Heart left ventricle (tissue), 16 donors: ENCODE measurements at regions of chr15 and their contacts with region 1.

Region 1: GRCh38 chr15:31215490-31216214 is 111.0 kb upstream of the KLF13 start:
- DNase-seq: peak; percentile 81 to 95 (median 88)
- ATAC-seq: peak; percentile 77 to 90 (median 87)
- H3K4me3 ChIP-seq: peak overlapping the region; percentile 44 to 75 (median 65)
- H3K27ac ChIP-seq: peak overlapping the region; percentile 91 to 98 (median 96)
- H3K4me1 ChIP-seq: peaks cover 0 to 67% (median 33%) of the 10 kb centered on the region in 12 donors
- H3K27me3 ChIP-seq: no peaks in the 10 kb centered on the region
- CTCF ChIP-seq: peak; percentile 72 to 98 (median 92)
- POLR2A ChIP-seq: peak in 1 of 2 donors; percentile 36

Region 2: DNA sequence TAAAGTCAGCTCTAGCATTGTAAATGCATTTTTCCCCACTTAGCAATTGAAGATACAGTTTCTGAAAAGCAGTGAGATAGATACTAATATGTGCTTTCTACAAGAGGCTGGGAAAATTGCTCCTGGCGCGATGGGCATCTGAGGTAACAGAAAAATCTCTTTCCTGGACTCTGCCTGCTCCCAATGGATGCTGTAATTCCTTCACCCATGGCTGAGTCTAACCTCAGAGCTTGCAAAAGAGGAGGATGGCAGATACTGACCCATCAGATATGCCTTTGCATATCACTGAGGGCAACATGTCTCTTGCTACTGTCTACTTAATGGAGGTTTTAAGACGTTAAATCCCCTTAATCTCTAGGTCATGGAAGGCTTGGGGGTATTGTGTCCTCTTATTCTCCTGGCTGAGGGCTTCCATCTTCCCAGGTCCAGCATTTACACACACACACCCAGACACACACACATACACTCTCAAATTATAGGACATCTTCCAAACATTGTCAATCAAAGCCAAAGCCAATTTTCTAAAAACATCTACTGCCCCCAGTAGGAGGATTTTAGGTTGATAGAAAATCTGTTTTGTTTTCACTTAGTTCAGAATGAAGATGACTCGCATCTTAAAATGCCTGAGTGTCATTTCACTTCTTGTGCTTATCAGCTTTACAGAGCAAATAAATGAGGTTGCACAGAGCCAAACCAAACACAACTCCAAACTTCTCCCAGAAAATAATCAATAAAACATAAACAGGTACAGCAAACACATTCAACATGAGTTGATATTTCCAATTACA is 116.5 kb before region 1 on chr15:
- intact Hi-C with region 1: no loop called
- DNase-seq: no peak
- ATAC-seq: no peak
- H3K4me3 ChIP-seq: no peak overlapping the region
- H3K27ac ChIP-seq: no peak overlapping the region
- H3K4me1 ChIP-seq: peaks cover 0 to 7% (median 0%) of the 10 kb centered on the region in 12 donors
- H3K27me3 ChIP-seq: peaks cover 0 to 4% (median 0%) of the 10 kb centered on the region in 9 donors
- CTCF ChIP-seq: peak in 5 of 12 donors; percentile 16 to 28 (median 19)
- POLR2A ChIP-seq: no peak

Region 3: GRCh38 chr15:31254431-31255175 is 39.0 kb after region 1 on chr15:
- intact Hi-C with region 1: loop called in 1 of 10 experiments (anchors 5 kb)
- DNase-seq: peak in 1 of 5 donors; percentile 70
- ATAC-seq: peak; percentile 18 to 74 (median 67)
- H3K4me3 ChIP-seq: no peak overlapping the region
- H3K27ac ChIP-seq: peak overlapping the region in 2 of 12 donors; percentile 55 to 76
- H3K4me1 ChIP-seq: peaks cover 0 to 34% (median 2%) of the 10 kb centered on the region in 12 donors
- H3K27me3 ChIP-seq: no peaks in the 10 kb centered on the region
- CTCF ChIP-seq: no peak
- POLR2A ChIP-seq: no peak

Region 4: DNA sequence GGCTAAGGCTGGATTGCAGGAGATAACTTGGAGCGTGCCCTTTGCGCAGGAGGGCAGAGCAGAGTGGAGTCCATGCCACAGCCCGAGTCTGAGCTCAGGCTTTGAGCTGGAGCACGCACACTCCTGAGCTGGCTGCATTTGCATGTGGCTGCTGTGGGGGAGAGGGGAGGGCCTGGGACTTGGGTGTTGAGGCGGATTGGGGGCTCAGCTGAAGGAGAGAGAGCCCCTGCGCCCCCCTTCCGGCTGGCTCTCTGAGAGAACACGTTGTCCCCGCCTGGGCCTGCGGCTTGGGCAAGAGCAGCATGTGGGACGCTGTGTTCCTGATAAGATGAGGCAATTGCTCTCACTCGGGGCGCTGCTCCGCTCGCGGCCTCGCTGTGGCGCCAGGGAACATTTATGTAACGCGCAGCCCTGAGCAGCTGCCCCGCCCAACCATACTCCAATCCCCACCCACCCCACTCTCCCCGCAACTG is 150.0 kb after region 1 on chr15:
- intact Hi-C with region 1: loop called in 1 of 10 experiments (anchors 5 kb)
- DNase-seq: peak; percentile 89 to 98 (median 93)
- ATAC-seq: peak; percentile 89 to 92 (median 91)
- H3K4me3 ChIP-seq: peak overlapping the region in 11 of 12 donors; percentile 7 to 47 (median 35)
- H3K27ac ChIP-seq: peak overlapping the region; percentile 87 to 96 (median 92)
- H3K4me1 ChIP-seq: peaks cover 31 to 100% (median 92%) of the 10 kb centered on the region in 12 donors
- H3K27me3 ChIP-seq: no peaks in the 10 kb centered on the region
- CTCF ChIP-seq: peak in 11 of 12 donors; percentile 8 to 66 (median 43)
- POLR2A ChIP-seq: peak in 1 of 2 donors; percentile 31

Region 5: GRCh38 chr15:31379042-31379441 is 163.4 kb after region 1 on chr15:
- intact Hi-C with region 1: no loop called
- DNase-seq: no peak
- ATAC-seq: peak in 1 of 4 donors; percentile 29
- H3K4me3 ChIP-seq: no peak overlapping the region
- H3K27ac ChIP-seq: peak overlapping the region in 8 of 12 donors; percentile 35 to 61 (median 50)
- H3K4me1 ChIP-seq: peaks cover 0 to 76% (median 48%) of the 10 kb centered on the region in 12 donors
- H3K27me3 ChIP-seq: no peaks in the 10 kb centered on the region
- CTCF ChIP-seq: no peak
- POLR2A ChIP-seq: no peak

Region 6: DNA sequence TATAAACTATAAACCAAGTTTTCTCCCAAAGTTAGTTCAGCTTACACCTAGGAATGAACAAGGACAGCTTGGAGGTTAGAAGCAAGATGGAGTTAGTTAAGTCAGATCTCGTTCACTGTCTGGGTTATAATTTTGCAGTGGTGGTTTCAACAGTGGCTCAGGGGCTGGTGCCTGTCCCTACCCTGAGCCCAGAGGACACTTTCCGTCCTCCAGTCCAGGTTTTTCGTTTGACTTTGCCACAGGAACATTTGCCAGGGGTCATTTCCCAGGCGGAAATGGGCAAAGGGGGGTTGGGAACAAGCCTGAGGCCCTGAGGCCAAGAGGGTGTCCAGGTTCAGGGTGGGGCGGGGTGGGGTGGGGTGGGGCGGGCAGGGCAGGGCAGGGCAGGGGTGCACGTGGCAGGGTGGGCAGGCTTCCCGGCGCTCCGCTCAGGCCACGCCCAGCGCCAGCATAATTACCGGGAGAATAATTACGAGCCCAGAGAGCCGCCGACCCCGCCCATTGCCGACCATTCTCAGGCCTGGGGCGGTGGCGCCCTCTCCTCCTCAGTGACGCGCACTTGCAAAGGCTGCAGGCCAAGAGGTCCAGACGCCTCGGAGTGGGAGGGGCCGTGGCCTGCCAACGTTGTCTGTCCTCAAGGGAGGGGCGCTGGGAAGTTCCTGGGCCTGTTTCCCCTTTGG is 181.4 kb after region 1 on chr15:
- intact Hi-C with region 1: loop called in 5 of 10 experiments (anchors 2 to 10 kb)
- DNase-seq: peak; percentile 92 to 96 (median 93)
- ATAC-seq: peak; percentile 88 to 94 (median 94)
- H3K4me3 ChIP-seq: peak overlapping the region in 5 of 12 donors; percentile 0 to 32 (median 13)
- H3K27ac ChIP-seq: peak overlapping the region; percentile 53 to 86 (median 74)
- H3K4me1 ChIP-seq: peaks cover 0 to 40% (median 25%) of the 10 kb centered on the region in 12 donors
- H3K27me3 ChIP-seq: no peaks in the 10 kb centered on the region
- CTCF ChIP-seq: peak in 7 of 12 donors; percentile 9 to 57 (median 37)
- POLR2A ChIP-seq: no peak